ENCODE measurements at regions of chr14 and their contacts with region 1.

Region 1: GRCh38 chr14:103104654-103105452 is 10.3 kb downstream of the EXOC3L4 start:
- DNase-seq: peak in 1 of 3 donors; percentile 77
- ATAC-seq: peak; percentile 44 to 57 (median 46)
- H3K4me3 ChIP-seq: peak overlapping the region in 1 of 3 donors; percentile 45
- H3K27ac ChIP-seq: peak overlapping the region in 1 of 3 donors; percentile 63
- H3K4me1 ChIP-seq: peaks cover 0 to 76% (median 27%) of the 10 kb centered on the region in 4 donors
- H3K27me3 ChIP-seq: no peaks in the 10 kb centered on the region
- CTCF ChIP-seq: peak; percentile 86 to 97 (median 92)
- POLR2A ChIP-seq: no peak

Region 2: DNA sequence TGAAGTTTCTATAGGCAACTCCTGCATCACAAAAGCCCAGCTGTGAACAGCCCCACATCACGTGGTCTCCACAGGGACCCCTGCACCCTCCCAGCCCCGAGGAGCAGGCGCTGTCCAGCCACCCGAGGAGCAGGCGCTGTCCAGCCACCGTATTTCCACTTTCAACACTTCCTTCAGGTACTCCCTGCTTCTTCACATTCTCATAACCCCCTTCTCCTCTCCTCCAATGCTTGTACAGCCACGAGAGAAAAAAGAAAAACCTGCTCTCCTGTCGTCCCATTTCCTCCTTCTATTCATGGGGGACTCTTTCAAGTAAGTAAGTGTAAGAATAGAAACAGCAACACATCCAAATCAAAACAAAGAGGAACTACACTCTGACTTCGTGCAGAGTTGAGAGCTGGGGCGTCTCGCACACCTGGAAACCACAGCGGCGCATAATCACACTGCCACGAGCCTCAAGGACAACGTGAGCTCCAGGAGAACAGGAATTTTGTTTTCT is 59.4 kb before region 1 on chr14:
- intact Hi-C with region 1: no loop called
- DNase-seq: no peak
- ATAC-seq: peak in 2 of 4 donors; percentile 12 to 41
- H3K4me3 ChIP-seq: no peak overlapping the region
- H3K27ac ChIP-seq: no peak overlapping the region
- H3K4me1 ChIP-seq: peaks cover 0 to 41% (median 16%) of the 10 kb centered on the region in 4 donors
- H3K27me3 ChIP-seq: no peaks in the 10 kb centered on the region
- CTCF ChIP-seq: no peak
- POLR2A ChIP-seq: no peak

Region 3: GRCh38 chr14:103185051-103185992 is 80.5 kb after region 1 on chr14:
- intact Hi-C with region 1: loop called (anchors 10 kb)
- DNase-seq: no peak
- ATAC-seq: peak in 2 of 4 donors; percentile 11 to 48
- H3K4me3 ChIP-seq: no peak overlapping the region
- H3K27ac ChIP-seq: peak overlapping the region; percentile 58 to 84 (median 65)
- H3K4me1 ChIP-seq: peaks cover 0 to 30% (median 3%) of the 10 kb centered on the region in 4 donors
- H3K27me3 ChIP-seq: no peaks in the 10 kb centered on the region
- CTCF ChIP-seq: peak; percentile 64 to 73 (median 69)
- POLR2A ChIP-seq: no peak

Region 4: DNA sequence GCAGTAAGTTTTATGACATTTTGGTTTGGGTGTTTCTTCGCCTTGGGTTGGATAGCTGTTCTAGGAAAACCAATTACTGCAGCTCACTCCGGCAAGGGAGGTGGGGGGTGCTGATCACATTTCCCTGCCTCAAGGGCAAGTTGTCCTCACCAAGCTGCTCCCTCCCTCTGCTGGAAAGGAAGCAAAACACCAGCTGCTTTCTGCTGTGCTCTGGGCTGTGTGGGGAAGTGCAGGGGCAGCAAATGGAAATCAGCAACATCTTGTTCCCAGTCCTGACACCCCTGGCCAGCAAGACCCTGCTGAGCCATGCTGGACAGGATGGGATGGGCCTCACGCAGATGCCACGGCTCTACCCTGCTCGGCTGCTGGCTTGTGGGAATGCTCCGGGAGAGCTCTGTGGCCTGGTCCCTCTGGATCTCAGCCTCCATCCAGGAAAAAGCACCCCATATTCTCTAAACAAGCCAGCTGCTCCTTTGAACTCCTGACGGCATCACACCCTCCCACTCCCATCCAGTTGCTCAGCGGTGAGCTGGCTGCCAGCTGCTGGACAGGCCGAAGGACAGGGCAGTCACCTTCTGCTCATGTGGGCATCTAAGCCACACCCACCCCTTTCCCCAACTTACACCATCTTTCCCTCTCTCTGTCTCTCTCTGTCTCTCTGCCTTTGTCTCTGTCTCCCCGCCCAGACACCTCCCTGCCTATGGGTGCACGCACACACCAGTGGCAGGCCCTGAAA is 176.8 kb after region 1 on chr14:
- intact Hi-C with region 1: loop called in 1 of 2 experiments (anchors 10 kb)
- DNase-seq: peak; percentile 58 to 84 (median 80)
- ATAC-seq: peak; percentile 51 to 66 (median 55)
- H3K4me3 ChIP-seq: no peak overlapping the region
- H3K27ac ChIP-seq: peak overlapping the region; percentile 1 to 62 (median 57)
- H3K4me1 ChIP-seq: peaks cover 0 to 10% (median 3%) of the 10 kb centered on the region in 4 donors
- H3K27me3 ChIP-seq: no peaks in the 10 kb centered on the region
- CTCF ChIP-seq: peak; percentile 29 to 46 (median 42)
- POLR2A ChIP-seq: no peak

Region 5: DNA sequence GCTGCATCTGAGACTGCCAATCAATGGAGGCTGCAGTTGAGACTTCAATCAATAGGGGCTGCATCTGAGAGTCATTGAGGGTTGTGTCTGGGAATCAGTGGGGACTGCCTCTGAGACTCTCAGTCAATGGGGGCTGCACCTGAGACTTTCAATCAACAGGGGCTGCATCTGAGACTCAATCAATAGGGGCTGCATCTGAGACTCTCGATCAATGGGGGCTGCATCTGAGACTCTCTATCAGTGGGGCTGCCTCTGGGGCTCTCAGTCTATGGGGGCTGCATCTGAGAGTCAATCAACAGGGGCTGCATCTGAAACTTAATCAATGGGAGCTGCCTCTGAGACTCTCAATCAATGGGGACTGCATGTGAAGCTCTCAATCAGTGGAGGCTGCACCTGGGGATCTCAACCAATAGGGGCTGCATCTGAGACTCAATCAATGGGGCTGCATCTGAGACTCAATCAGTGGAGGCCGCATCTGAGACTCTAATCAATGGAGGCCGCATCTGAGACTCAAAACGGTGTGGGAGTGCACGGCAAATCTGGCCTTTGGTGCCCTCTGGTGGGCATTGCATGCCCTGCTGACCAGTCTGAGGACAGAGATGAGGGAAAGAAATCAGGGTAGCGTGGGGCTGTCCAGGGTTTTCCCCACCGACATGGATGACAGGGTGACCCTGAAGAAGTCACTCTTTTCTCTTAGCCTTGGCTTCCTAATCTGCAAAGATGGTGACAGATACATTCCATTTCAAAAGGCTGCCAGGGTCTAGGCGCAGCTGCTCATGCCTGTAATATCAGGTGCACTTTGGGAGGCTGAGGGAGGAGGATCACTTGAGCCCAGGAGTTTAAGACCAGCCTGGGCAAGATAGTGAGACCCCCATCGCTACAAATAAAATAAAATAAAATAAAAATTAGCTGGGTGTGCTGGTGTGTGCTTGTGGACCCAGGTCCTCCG is 187.8 kb after region 1 on chr14:
- intact Hi-C with region 1: loop called (anchors 5 to 10 kb)
- DNase-seq: peak; percentile 75 to 80 (median 79)
- ATAC-seq: peak; percentile 89 to 95 (median 92)
- H3K4me3 ChIP-seq: no peak overlapping the region
- H3K27ac ChIP-seq: no peak overlapping the region
- H3K4me1 ChIP-seq: no peaks in the 10 kb centered on the region
- H3K27me3 ChIP-seq: no peaks in the 10 kb centered on the region
- CTCF ChIP-seq: peak; percentile 89 to 93 (median 92)
- POLR2A ChIP-seq: no peak

Measured in right lobe of liver (tissue), 6 donors.